A549 (cell line): ENCODE measurements at regions of chr4 and their contacts with region 1.

Region 1: DNA sequence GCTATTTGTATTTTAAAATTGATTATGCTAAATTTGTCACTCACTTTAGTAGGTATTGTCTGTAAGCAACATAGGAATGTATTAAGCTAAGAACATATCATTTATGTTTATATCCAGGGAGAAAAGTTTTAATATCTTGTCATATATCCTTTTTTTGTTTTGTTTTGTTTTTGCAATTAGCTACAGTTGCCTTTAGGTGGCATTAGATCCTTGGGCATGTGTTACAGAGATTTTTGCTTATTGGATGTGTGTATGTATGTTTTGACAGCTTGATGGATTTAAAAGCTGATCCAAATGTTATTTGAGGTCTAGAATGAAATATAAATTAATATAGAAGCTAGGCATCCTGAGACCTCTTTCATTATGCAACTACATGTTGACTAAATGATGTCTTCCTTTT is 36.1 kb upstream of the OTUD4 start:
- DNase-seq: peak in 1 of 2 experiments; percentile 12
- ATAC-seq: no peak
- H3K4me3 ChIP-seq: no peak overlapping the region
- H3K27ac ChIP-seq: no peak overlapping the region
- H3K4me1 ChIP-seq: no peaks in the 10 kb centered on the region
- CTCF ChIP-seq: peak; percentile 56
- EP300 ChIP-seq: no peak
- POLR2A ChIP-seq: no peak
- RAD21 ChIP-seq: peak; percentile 66 to 76

Region 2: DNA sequence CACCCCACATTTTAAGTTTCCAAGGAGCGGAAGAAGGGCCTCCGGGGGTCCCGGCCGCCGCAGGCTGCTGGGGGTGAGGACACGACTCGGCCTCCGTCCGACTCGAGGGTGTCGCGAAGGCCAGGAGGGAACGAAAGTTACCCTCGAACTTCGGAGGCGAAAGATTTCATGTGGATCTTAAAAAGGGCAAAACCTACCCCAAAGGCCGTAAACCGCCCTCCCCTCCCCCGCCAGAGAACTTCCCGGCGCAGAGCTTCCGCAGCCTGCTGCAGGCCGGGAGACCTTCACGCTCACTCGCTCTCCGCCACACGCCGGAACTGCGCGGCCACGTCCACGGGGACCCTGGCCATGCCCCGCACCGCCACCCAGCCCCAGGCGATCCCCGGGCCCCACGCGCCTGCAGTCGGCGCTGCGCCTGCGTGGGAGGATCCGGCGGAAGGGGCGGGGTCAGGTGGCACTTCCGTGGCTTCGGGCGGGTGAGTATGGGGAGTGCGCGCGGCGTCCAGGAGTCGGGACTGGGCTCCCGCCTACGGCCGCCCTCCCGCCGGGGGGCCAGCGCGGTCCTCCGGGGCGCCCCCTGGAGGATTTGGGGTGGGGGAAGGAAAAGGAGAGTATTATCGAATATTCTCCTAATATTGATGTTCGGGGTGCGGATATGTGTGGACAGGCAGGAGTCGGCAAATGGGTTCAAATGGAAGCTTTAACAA is 402.6 kb after region 1 on chr4 and contains the start of gene MMAA:
- CTCF ChIA-PET with region 1: interaction called, 29 read pairs
- POLR2A ChIA-PET with region 1: no interaction called
- DNase-seq: peak; percentile 74 to 92
- ATAC-seq: peak; percentile 96 to 99
- H3K4me3 ChIP-seq: peak within 1 kb of the TSS; percentile 74
- H3K27ac ChIP-seq: peak within 1 kb of the TSS; percentile 95 to 96
- H3K4me1 ChIP-seq: peaks cover 22% of the 10 kb centered on the region
- CTCF ChIP-seq: peak; percentile 68
- EP300 ChIP-seq: no peak
- POLR2A ChIP-seq: peak; percentile 90
- RAD21 ChIP-seq: peak; percentile 28 to 45; a peak in 4 of 5 replicates
- polyA plus RNA-seq, gene MMAA: 2.6 and 4.0 TPM in 2 replicates